ENCODE measurements at regions of chr18 and their contacts with region 1.

Region 1: DNA sequence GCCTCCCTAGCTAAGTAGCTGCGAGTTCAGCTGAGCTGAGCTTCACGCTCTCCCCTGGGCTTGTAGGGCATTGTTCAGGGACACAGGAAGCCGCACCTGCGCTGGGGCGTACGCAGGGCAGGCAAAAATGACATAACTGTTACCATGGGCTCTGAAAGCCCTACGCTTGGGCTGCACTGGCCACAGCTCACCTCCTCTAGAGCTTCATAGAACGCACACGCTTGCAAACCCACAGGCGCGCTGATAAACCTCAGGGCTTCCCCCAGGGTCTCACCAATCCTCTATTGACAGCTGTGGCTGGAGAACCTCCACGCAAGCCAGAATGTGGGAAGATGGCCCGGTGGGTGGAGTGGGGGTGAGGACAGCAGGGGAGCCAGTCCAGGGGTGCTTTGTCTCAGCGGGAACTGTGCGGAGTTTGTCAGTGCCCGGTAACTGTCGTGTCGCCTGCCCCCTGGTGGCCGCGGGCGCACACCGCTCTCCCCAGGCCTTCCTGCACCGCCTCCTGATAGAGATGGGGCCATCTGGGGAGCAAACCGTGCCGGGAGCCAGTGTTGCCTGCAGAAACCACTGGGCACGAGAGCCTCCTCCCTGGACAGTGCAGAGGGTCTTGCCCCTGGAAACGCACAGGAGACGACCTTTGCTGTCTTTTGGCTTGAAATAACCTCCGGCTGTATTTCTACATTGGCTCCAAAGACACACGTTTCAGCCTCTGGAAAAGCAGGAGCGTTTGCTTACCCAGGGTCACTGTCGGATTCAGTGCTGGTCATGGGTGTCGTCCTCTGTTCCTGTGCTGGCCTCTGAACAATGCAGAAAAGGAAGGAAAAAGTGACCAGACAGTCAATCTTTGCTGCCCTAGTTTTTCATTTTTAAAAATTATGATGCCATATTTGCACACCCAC is 17.0 kb upstream of the CIDEA start:
- DNase-seq: peak; percentile 88
- CTCF ChIP-seq: peak; percentile 96

Region 2: GRCh38 chr18:10604182-10604581 is 1633.0 kb before region 1 on chr18:
- in situ Hi-C with region 1: loop called (anchors 25 kb)
- DNase-seq: peak; percentile 47
- CTCF ChIP-seq: no peak

Region 3: GRCh38 chr18:11688989-11689668 is 548.1 kb before region 1 on chr18 and contains the start of gene GNAL:
- in situ Hi-C with region 1: no loop called
- DNase-seq: peak; percentile 85
- CTCF ChIP-seq: no peak

Region 4: DNA sequence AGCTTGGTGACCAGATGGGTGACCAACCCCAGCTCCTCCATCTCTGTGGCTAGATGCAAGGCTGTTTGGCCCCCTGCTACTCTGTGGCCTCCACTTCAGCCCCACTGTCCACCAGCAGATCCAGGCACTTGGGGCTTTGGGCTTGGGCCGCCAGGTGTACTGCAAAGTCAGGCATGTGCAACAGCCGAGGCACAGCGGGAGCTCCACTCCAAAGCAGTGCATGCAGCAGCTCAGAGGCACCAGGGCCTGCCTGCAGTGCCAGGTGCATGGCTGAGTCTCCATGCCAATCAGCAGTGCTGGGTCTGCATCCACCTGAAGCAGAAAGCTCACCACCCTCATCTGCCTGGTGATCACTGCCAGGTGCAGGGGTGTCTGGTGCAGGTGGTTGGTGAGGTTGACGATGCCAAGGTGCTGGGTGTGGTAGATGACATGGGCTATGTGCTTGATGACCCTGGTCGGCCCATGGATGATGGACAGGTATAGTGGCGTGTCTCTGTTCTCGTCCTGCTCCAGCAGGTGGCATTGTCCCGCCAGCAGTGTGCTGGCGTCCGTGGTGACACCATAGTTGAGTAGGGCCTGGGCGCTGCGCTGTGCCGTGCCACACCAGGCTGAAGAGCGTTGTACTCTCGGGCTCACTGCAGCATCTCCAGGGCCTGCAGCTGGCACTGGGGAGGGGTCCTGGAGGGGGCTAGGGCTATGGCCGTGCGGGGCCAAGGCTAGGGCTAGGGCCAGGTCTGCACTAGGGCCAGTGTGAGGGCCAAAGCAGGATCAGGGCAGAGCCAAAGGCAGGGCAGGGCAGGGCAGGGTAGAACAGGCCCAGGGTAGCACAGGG is 144.6 kb before region 1 on chr18:
- in situ Hi-C with region 1: loop called (anchors 10 kb)
- DNase-seq: peak; percentile 69
- CTCF ChIP-seq: no peak

Region 5: DNA sequence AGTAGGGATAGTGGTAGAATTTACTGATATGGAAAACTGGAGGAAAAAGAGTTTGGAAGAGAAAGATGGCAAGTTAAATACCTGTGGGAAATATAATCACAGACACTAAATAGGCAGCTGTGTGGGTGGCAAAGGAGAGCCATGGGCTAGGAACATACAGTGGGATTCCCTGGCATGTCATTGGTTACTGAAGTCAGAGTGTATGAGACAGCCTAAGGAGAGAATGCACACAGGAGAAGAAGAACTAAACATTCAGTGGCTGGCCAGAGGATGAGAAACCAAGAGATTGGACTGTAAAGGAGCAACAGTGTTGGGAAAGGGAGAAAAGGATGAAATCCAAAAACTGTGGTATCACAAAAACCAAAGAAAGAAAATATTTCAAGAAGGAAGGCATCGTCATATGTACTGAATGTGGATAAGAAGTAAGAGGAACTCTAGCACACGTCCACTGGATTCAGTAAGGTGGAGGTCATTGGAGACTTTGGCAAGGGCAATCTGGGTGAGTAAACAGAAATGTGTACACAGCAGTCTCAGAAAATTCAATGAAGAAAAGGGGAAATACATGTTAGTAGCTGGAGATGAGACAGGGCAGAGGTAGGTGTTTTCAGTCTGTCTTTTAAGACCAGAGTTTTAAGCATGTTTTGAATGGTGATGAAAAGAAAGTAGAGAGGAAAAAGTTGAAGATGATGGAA is 337.5 kb after region 1 on chr18:
- in situ Hi-C with region 1: no loop called
- DNase-seq: no peak
- CTCF ChIP-seq: no peak